Dendritic cell treated with granulocyte-macrophage colony-stimulating factor and Interleukin-4, amounts not matched to agents 40 ng/mL and 50 ng/mL, for 4 days (primary cell): ENCODE measurements at regions of chr3 and their contacts with region 1.

Region 1: DNA sequence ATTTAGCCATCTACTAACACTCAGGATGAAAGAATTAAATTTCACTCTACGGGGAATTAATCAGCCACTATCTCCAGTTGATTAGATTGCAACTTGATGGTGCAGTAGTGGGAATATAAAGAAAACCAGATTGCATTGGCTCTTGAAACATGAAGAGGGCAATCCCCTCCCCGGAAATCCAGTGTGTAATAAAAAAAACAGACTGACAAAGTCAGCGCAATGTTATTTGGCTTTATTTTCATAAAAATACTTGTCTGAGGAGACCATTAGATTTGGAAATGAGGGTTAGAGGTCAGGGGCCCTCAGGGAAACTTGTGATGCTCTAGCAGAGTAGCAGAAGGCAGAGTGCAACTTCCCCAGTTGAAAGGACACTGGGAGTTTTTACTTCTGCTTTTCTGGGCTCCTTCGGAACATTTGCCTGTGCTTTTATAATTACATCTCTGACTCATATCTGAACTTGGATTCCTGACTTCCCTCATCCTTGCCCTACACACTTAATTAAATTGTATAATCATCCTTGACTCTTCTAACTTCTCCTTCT is 326.8 kb downstream of the TUSC7 start:
- H3K4me3 Mint-ChIP-seq: no peak overlapping the region
- H3K27ac Mint-ChIP-seq: peak overlapping the region; percentile 78
- H3K4me1 Mint-ChIP-seq: peaks cover 22% of the 10 kb centered on the region
- H3K27me3 Mint-ChIP-seq: no peaks in the 10 kb centered on the region

Region 2: GRCh38 chr3:117059067-117059955 is 23.0 kb after region 1 on chr3:
- intact Hi-C with region 1: loop called (anchors 2 kb)
- H3K4me3 Mint-ChIP-seq: no peak overlapping the region
- H3K27ac Mint-ChIP-seq: no peak overlapping the region
- H3K4me1 Mint-ChIP-seq: peaks cover 18% of the 10 kb centered on the region
- H3K27me3 Mint-ChIP-seq: no peaks in the 10 kb centered on the region

Region 3: GRCh38 chr3:117193390-117193789 is 157.1 kb after region 1 on chr3:
- intact Hi-C with region 1: no loop called
- H3K4me3 Mint-ChIP-seq: no peak overlapping the region
- H3K27ac Mint-ChIP-seq: no peak overlapping the region
- H3K4me1 Mint-ChIP-seq: no peaks in the 10 kb centered on the region
- H3K27me3 Mint-ChIP-seq: no peaks in the 10 kb centered on the region

Region 4: DNA sequence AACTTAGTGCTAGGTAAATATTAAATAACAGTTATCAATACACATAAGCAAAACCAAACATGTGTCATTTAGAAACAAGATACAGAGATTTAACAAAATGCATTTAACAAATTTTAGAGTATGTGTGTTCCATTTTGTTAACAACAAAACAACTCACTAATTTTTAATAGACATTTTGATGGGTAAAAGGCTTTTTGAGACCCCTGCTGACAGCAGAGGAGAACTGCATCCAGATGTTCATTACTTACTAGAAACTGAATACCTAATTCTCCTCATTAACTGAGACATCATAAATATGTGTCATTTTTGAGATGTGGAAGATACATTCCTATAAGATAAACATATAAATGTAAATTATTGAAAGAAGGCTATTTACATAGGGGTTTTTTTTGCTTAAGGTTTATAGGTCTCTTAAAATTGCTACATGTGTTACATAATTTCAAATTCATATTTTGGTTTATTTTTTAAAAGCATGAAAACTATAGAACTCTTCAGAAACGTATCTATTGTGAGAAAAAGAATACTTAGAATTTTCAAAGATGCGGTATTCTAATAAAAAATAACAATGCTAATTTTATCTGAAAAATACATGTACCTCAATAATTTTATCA is 683.1 kb after region 1 on chr3:
- intact Hi-C with region 1: loop called (anchors 5 kb)
- H3K4me3 Mint-ChIP-seq: no peak overlapping the region
- H3K27ac Mint-ChIP-seq: no peak overlapping the region
- H3K4me1 Mint-ChIP-seq: peaks cover 28% of the 10 kb centered on the region
- H3K27me3 Mint-ChIP-seq: peaks cover 5% of the 10 kb centered on the region